AG04449 (cell line): ENCODE measurements at regions of chr4 and their contacts with region 1.

Region 1: DNA sequence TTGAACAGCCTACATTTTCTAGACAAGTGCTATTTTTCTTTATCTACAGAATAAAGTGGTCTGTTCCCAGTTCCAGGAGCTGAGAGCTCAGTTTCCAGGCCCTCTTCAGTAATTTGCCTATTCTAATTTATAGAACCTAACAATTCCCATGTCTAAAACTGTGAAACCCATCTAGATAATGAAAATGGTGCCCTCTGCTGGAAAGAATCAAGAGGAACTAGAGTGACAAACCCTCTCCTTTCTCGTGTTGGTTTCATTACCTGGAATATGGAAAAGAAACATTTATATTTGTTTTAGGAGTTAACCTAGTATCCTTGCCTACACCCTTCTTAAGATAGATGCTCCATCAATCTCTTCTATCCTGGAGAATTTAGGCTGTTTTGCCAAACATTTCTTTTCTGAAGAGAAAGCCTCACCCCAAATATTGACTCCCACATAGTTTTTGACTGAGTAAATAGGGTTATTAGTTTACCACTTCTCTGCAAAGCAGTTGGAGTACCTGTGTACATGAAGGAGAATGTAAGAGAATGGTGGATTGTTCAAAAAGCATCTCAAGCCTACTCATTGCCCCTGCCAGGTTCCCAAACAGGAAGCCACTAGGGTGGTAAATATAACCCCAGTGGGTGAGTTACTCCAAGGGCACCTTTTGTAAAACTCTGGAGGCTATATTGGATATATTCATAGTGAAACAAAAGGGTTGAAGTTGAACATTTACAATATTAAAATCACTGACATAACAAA is 121.6 kb downstream of the RASL11B start:
- DNase-seq: no peak
- H3K4me3 ChIP-seq: no peak overlapping the region
- CTCF ChIP-seq: peak; percentile 56

Region 2: GRCh38 chr4:52234561-52235440 is 748.9 kb before region 1 on chr4:
- CTCF ChIA-PET with region 1: interaction called, 10 read pairs
- POLR2A ChIA-PET with region 1: no interaction called
- DNase-seq: peak; percentile 14
- H3K4me3 ChIP-seq: no peak overlapping the region
- CTCF ChIP-seq: no peak

Region 3: GRCh38 chr4:52588097-52588782 is 395.5 kb before region 1 on chr4:
- CTCF ChIA-PET with region 1: interaction called, 18 read pairs
- POLR2A ChIA-PET with region 1: no interaction called
- DNase-seq: no peak
- H3K4me3 ChIP-seq: no peak overlapping the region
- CTCF ChIP-seq: peak; percentile 53

Region 4: DNA sequence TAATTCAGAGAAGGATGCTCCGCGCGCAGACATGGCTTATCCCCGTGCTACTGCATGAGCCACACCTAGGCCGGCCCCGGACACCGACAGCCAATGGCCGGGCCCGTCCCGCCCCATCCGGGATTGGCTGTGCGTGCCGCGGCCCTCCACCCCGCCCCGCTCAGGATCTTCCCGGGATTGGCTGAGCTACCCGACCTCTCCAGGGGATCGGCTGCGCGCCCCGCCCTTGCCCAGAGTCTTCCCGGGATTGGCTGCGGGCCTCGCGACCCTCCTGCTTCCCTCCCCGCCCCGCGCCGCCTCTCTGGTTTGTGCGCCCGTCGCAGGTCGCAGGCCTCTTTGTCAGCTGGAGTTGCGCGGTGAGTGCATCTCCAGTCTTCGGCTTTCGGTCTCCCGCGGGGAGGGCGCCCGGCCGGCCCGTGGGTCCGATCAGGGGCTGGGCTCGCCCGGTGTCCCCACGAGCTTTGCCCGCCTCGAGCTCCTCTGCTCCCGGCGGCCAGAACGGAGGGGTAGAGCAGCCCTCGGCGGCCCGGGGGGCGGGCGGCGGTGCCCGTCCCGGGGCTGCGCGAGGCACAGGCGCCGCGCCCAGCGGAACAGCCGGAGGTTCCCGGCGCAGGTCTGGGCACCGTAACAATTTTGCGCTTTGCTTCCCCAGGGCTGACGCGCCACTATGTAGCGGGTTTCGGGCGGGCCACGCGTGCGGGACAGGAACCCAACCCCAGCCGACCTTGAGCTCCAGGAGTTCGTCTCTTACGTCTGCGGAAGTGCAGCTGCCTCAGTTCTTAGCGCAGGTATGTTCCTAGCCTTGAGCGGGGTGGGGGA is 271.4 kb before region 1 on chr4:
- CTCF ChIA-PET with region 1: interaction called, 31 read pairs
- POLR2A ChIA-PET with region 1: no interaction called
- DNase-seq: peak; percentile 52
- H3K4me3 ChIP-seq: peak overlapping the region; percentile 86
- CTCF ChIP-seq: no peak

Region 5: GRCh38 chr4:52966781-52967180 is 17.0 kb before region 1 on chr4:
- CTCF ChIA-PET with region 1: interaction called, 11 read pairs
- POLR2A ChIA-PET with region 1: no interaction called
- DNase-seq: no peak
- H3K4me3 ChIP-seq: no peak overlapping the region
- CTCF ChIP-seq: no peak